Stomach (tissue), 19 donors: ENCODE measurements at regions of chr11 and their contacts with region 1.

Region 1: GRCh38 chr11:72722050-72722748 is 30.0 kb downstream of the ARAP1 start:
- DNase-seq: peak; percentile 91 to 96
- H3K4me3 ChIP-seq: peak overlapping the region; percentile 61 to 75 (median 66)
- H3K27ac ChIP-seq: peak overlapping the region; percentile 84 to 93 (median 88)
- H3K4me1 ChIP-seq: peaks cover 45 to 80% (median 63%) of the 10 kb centered on the region in 4 donors
- H3K27me3 ChIP-seq: no peaks in the 10 kb centered on the region
- CTCF ChIP-seq: no peak
- EP300 ChIP-seq: no peak
- POLR2A ChIP-seq: peak in 1 of 4 donors; percentile 13

Region 2: GRCh38 chr11:72222907-72223614 is 499.1 kb before region 1 on chr11:
- intact Hi-C with region 1: no loop called
- DNase-seq: peak; percentile 96 to 98
- H3K4me3 ChIP-seq: peak overlapping the region; percentile 61 to 85 (median 80)
- H3K27ac ChIP-seq: peak overlapping the region; percentile 95 to 98 (median 97)
- H3K4me1 ChIP-seq: peaks cover 35 to 43% (median 42%) of the 10 kb centered on the region in 4 donors
- H3K27me3 ChIP-seq: no peaks in the 10 kb centered on the region
- CTCF ChIP-seq: peak in 4 of 7 experiments; percentile 27 to 78 (median 44)
- EP300 ChIP-seq: no peak
- POLR2A ChIP-seq: no peak

Region 3: DNA sequence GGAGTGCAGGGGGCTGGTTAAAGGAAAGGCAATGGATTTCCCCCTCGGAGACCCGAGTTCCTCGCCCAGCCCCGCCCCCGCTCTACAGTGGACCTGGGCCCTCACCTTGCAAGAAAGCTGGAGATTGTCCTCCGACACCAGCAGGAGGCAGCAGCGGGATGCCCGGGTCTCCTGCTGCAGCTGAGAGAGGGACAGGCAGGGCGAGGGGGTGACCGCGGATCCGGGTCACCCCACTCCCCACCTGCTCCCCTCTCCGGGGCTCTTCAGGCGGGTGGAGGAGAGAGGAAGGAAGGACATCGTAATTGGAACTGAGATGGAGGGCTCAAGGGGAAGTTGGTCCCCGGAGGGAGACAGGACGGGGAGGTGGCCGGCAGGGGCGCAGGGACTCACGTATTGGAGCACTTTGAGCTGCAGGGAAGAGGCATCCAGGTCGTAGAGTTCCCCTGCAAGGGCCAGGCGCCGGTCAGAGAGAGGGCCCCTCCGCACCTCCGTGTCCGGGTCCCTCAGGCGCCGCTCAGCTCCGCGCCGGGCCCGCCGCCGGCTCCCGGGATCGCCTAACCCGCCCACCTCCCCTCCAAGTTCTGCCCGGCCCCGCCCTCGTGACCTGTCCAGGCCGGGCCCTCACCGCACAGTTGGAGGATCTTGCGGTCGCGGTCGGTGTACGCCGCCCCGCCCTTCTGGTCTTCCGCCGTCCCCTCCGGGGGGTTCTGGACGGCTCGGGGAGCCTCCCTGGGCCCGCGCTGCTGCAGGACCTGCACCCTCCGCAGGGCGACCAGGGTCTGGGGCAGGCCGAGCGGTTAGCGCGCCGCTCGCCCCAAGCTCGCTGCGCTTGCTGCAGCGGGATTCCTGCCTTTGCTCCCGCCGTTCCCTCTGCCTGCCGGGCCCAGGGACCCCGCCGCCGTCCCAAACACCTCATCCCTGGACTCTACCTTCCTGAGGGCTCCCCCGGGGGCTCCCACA is 132.1 kb before region 1 on chr11:
- intact Hi-C with region 1: no loop called
- DNase-seq: peak; percentile 47 to 74
- H3K4me3 ChIP-seq: peak overlapping the region in 3 of 4 donors; percentile 26 to 49 (median 27)
- H3K27ac ChIP-seq: no peak overlapping the region
- H3K4me1 ChIP-seq: peaks cover 8 to 23% (median 16%) of the 10 kb centered on the region in 4 donors
- H3K27me3 ChIP-seq: peaks cover 0 to 91% (median 40%) of the 10 kb centered on the region in 3 donors
- CTCF ChIP-seq: peak in 5 of 7 experiments; percentile 11 to 38 (median 20)
- EP300 ChIP-seq: no peak
- POLR2A ChIP-seq: no peak

Region 4: GRCh38 chr11:72814286-72815109 is 92.3 kb after region 1 on chr11 and contains the start of gene ATG16L2:
- intact Hi-C with region 1: loop called (anchors 10 kb)
- DNase-seq: peak; percentile 89 to 96
- H3K4me3 ChIP-seq: peak within 1 kb of the TSS; percentile 89 to 95 (median 90)
- H3K27ac ChIP-seq: peak within 1 kb of the TSS; percentile 88 to 98 (median 96)
- H3K4me1 ChIP-seq: peaks cover 27 to 52% (median 42%) of the 10 kb centered on the region in 4 donors
- H3K27me3 ChIP-seq: no peaks in the 10 kb centered on the region
- CTCF ChIP-seq: peak in 3 of 7 experiments; percentile 25 to 54 (median 30)
- EP300 ChIP-seq: no peak
- POLR2A ChIP-seq: peak in 1 of 4 donors; percentile 28
- total RNA-seq, gene ATG16L2: 13.0 to 266 (median 40.3) TPM